AG04450 (cell line): ENCODE measurements at regions of chr10 and their contacts with region 1.

Region 1: GRCh38 chr10:84537447-84537931 is 209.1 kb downstream of the CCSER2 start:
- DNase-seq: peak; percentile 21
- H3K4me3 ChIP-seq: no peak overlapping the region
- H3K27ac ChIP-seq: no peak overlapping the region
- H3K27me3 ChIP-seq: no peaks in the 10 kb centered on the region
- CTCF ChIP-seq: peak; percentile 77

Region 2: DNA sequence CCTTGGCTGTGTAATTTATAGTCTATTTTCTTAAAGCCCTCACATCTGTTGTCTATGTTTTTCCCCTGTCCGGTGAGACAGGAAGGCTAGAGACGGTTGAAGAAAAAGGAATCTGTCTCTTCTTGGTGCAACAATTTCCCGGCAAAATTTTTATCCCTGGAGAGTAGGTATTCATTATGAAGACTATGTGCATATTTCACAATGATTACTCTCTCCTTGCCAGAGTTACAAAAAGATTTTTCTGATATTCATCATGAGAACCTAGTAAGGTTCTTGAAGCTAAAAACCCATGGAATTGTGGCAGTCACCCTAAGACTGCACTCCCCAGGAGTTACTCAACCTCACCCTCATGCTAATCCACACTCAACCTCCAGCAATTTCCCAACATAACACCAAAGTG is 453.1 kb before region 1 on chr10:
- CTCF ChIA-PET with region 1: no interaction called
- POLR2A ChIA-PET with region 1: no interaction called
- DNase-seq: no peak
- H3K4me3 ChIP-seq: no peak overlapping the region
- H3K27ac ChIP-seq: no peak overlapping the region
- H3K27me3 ChIP-seq: no peaks in the 10 kb centered on the region
- CTCF ChIP-seq: no peak

Region 3: DNA sequence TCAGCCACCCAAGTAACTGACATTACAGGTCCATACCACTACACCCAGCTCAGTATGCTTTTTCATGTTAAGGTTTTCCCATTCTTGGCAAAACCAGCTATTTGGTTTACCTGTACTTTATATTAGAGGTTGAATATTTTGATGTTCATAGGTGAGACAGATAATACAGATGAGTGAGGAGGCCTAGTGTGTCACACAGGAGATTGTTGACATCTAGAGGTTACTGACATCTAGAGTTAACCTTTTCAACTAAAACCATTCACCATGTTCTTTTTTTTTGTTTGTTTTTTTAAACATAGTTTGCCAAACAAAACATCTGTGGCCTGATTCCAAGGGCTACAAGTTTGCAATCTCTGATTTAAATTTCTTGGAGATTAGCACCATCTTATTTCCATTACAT is 390.1 kb before region 1 on chr10:
- CTCF ChIA-PET with region 1: interaction called, 53 read pairs
- POLR2A ChIA-PET with region 1: no interaction called
- DNase-seq: no peak
- H3K4me3 ChIP-seq: no peak overlapping the region
- H3K27ac ChIP-seq: no peak overlapping the region
- H3K27me3 ChIP-seq: no peaks in the 10 kb centered on the region
- CTCF ChIP-seq: no peak

Region 4: DNA sequence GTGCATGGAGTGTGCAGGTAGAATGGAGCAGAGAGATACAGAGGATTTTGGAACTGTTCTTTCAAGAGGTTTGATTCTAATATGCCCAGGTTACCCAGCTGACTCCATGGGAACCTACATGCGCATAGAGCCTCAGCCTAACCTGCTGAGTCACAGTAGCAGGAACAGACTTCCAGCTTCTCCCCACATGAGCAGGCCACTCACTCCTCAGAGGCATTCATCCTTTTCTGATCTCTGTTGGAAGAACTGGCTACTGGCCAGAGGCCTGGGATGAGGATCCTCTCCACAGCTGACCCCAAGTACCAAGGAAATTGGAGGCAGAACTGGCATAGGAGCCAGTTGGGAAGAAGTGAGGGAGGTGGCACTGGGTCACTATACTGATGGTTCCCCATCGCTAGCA is 227.0 kb before region 1 on chr10:
- CTCF ChIA-PET with region 1: interaction called, 15 read pairs
- POLR2A ChIA-PET with region 1: interaction called, 4 read pairs
- DNase-seq: no peak
- H3K4me3 ChIP-seq: no peak overlapping the region
- H3K27ac ChIP-seq: peak overlapping the region; percentile 11
- H3K27me3 ChIP-seq: no peaks in the 10 kb centered on the region
- CTCF ChIP-seq: no peak

Region 5: DNA sequence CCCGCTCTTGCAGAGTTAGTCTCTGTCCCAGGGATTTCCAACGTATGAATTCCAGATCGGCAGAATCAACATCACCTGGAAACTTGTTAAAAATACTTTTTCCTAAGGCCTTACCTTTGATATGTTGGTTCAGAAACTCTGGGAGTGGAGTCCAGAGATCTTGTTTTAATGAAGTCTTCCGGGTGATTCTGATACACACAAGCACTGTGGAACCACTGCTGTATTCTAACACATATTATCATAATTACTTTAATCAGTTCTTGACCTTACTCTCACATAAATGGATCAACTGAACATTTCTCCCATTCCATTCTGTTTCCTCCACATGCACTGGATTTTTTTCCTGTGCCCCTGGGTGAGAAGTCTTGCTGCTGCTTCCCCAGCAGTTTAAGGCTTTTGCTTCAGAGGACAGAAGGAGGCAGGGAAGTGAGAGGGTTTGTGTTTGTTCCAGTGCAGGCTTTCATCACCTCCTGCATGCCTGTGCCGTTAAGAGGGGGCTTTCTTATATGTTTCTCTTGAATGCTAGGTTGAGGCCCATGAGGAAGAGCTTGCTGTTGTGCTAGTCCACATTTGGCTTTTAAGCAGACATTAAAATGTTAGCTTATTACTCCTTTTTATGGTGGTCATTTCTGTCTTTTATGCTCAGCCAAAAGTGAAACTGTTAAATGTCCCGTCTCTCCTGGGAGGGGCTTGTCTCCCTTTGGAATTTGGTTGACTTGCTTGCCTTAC is 176.7 kb before region 1 on chr10:
- CTCF ChIA-PET with region 1: interaction called, 42 read pairs
- POLR2A ChIA-PET with region 1: no interaction called
- DNase-seq: no peak
- H3K4me3 ChIP-seq: peak overlapping the region; percentile 53
- H3K27ac ChIP-seq: no peak overlapping the region
- H3K27me3 ChIP-seq: no peaks in the 10 kb centered on the region
- CTCF ChIP-seq: no peak

Region 6: DNA sequence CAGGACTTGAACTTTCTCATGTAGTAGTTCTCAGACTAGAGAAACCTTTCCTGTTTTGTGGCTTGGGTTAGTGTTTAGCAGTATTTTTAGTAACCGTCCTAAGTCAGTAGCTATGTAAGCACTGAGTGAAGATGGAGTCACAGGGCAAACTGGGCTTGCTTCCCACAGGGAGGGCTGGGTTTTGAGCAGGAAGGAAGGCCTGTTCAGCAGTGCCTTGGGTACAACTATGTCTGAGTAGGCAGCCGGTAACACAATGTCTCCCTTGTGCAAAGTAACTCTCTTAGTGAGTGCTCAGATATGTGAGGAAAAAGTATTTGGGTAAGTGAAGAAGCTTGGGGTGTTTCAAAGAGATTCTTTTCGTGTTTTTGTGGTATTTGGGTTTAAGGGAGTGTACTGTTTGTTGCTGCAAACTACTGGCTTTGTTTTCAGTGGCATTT is 112.7 kb before region 1 on chr10:
- CTCF ChIA-PET with region 1: interaction called, 41 read pairs
- POLR2A ChIA-PET with region 1: no interaction called
- DNase-seq: peak; percentile 89
- H3K4me3 ChIP-seq: peak overlapping the region; percentile 51
- H3K27ac ChIP-seq: peak overlapping the region; percentile 71
- H3K27me3 ChIP-seq: no peaks in the 10 kb centered on the region
- CTCF ChIP-seq: no peak

Region 7: DNA sequence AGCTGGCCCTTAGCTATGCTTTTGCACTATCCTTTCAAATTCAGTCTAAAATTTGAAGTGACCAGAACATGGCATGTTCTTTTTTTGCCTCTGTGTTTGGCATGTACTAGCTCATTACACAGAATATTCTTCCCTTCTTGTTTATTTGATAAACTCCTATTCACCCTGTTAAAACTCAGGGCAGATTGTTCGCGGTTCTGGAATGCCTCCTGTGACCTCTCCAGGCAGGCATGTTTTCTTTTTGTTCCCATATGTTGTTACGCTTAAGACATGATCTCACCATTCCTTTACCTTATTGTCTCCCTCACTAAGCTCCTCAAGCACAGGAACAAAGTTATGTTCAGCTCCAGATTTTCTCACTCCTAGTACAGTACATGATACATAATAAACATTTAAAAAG is 27.4 kb before region 1 on chr10:
- CTCF ChIA-PET with region 1: interaction called, 25 read pairs
- POLR2A ChIA-PET with region 1: no interaction called
- DNase-seq: peak; percentile 46
- H3K4me3 ChIP-seq: no peak overlapping the region
- H3K27ac ChIP-seq: peak overlapping the region; percentile 32
- H3K27me3 ChIP-seq: no peaks in the 10 kb centered on the region
- CTCF ChIP-seq: no peak

Region 8: GRCh38 chr10:86376852-86377796 is 1839.6 kb after region 1 on chr10:
- CTCF ChIA-PET with region 1: interaction called, 42 read pairs
- POLR2A ChIA-PET with region 1: no interaction called
- DNase-seq: no peak
- H3K4me3 ChIP-seq: peak overlapping the region; percentile 42; the same call in 1 of the 2 replicates
- H3K27ac ChIP-seq: no peak overlapping the region
- H3K27me3 ChIP-seq: peaks cover 27% of the 10 kb centered on the region
- CTCF ChIP-seq: peak; percentile 86